ENCODE measurements at regions of chr5 and their contacts with region 1.

Region 1: DNA sequence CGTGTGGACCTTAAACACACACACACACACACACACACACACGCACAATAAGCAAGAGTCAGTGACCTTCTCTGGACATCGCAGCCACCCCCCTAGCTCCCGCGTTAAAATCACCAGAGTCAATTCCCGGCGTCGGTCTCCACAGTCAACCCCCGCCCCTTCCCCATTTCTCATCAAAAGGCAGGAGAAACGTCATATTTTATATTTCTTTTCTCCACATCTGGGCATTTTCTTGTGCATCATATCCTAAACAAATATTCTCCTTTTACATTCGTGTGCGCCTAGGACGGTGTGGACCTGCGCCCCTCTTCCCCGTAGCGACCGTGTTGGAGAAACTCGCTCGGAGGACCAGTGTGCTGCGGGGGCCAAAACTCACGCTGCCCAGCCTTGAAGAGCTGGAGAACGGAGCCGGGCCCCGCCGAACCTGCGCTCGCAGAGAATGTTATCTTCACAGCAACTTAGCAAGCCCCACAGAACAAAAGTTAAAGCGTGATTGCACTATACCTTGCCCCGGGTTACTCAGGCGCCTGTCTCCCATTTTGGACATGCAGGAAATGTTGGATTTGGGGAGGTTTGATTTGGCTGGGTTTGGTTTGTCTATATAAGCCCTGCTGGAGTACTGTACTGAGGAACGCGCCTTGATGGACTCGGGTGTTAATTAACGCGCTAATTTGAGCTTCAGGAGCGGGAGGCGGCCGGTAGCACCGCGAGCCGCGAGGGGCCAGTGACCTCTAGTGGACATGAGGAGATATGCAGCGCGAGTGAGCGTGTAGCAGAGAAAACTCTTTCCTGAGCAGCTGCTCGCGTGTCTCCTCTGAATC is 192.4 kb downstream of the MEF2C start:
- DNase-seq: peak; percentile 47
- H3K4me3 ChIP-seq: no peak overlapping the region
- H3K27ac ChIP-seq: no peak overlapping the region
- H3K4me1 ChIP-seq: no peaks in the 10 kb centered on the region
- H3K27me3 ChIP-seq: peaks cover 49% of the 10 kb centered on the region
- CTCF ChIP-seq: peak; percentile 72 to 77 (median 73)
- POLR2A ChIP-seq: no peak

Region 2: DNA sequence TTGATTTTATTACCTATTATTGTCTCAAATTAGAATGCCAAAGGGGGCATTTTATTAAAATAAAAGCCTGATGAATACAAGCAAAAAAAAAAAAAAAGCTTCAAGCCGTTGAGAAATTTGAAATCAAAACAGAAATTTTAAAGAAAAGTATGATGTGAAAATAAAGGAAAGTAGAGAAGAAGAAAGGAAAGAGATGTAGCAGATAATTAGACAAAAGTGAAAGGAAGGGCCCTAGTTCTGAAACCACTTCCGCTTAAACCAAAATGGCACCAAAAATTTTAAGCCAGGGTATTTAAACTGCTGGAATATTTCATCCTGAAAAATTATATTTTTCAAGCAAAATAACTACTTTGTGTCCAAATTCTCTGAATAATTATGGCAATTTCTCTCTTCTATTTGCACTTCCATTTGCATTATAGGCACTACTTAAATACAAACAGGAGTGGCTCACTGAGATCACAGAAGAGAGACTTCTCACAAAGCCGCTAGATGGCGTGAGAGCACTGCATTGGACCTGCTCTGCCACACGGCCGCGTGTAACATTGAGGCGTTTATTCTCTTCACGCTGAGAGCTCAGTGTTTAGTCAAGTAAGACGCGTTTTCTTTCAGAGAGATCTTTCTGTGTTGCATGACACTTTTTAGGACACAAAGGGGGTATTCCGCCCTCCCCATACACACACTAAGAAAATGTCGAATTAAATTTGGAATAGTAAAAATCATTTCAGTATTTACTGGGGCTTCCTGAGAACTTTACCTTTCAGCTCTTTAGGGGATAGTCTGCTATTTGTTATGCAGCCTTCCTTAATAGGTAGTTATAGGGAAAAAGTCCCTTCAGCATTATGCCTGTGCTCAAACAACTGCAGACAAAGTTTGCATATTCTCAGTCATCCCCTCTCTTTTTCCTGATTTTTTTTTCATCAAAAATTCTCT is 909.5 kb before region 1 on chr5:
- intact Hi-C with region 1: loop called (anchors 2 kb)
- DNase-seq: peak; percentile 65
- H3K4me3 ChIP-seq: no peak overlapping the region
- H3K27ac ChIP-seq: no peak overlapping the region
- H3K4me1 ChIP-seq: no peaks in the 10 kb centered on the region
- H3K27me3 ChIP-seq: no peaks in the 10 kb centered on the region
- CTCF ChIP-seq: peak; percentile 41 to 83 (median 77)
- POLR2A ChIP-seq: no peak

Region 3: GRCh38 chr5:88634014-88634413 is 56.6 kb before region 1 on chr5:
- intact Hi-C with region 1: no loop called
- DNase-seq: no peak
- H3K4me3 ChIP-seq: no peak overlapping the region
- H3K27ac ChIP-seq: no peak overlapping the region
- H3K4me1 ChIP-seq: no peaks in the 10 kb centered on the region
- H3K27me3 ChIP-seq: no peaks in the 10 kb centered on the region
- CTCF ChIP-seq: no peak
- POLR2A ChIP-seq: no peak

Region 4: DNA sequence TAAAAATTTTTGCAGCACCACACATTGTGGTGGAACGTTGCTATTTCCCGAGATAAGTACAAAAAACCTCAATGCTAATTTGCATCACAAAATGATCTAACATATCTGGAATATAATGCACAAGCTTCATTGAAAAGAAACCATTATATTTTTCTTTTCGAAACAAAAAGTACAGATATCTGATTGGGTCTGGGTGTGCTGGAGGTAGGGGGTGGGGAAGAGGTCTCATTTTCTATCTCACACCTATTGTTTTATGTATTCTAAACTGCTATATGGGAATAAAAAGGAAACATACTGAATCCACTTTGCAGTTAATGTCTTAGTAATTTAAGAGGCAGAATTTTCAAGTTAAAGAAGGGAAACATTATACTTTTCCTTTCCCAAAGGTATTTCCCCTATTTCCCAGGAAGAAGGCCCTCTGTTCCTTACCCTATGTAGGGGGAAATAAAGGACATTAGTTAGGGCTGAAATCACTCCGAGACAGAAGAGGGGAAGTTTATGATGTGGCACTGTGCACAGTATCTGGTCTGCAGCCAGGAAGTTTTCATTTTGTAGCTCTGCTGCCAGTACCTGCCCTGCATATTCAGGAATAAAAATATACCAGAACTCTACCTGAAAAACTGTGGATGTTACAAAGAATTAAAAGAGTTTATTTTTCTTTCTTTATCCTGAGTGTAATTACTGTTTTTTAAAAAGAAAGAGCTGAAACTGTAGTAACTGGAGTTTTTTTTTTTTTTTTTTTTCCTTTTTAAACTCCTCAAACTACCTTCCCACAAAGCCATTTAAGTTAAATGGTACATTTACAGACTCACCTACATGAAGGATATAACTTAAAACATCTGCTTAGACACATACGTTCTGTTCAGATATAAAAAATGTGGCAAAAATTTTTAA is 185.0 kb after region 1 on chr5:
- intact Hi-C with region 1: no loop called
- DNase-seq: no peak
- H3K4me3 ChIP-seq: no peak overlapping the region
- H3K27ac ChIP-seq: no peak overlapping the region
- H3K4me1 ChIP-seq: no peaks in the 10 kb centered on the region
- H3K27me3 ChIP-seq: no peaks in the 10 kb centered on the region
- CTCF ChIP-seq: no peak
- POLR2A ChIP-seq: no peak